ENCODE measurements at regions of chr9 and their contacts with region 1.

Region 1: GRCh38 chr9:37811906-37812476 is 11.4 kb downstream of the DCAF10 start:
- DNase-seq: no peak
- ATAC-seq: no peak; the same call in 2 of the 3 replicates
- H3K4me3 ChIP-seq: no peak overlapping the region
- H3K27ac ChIP-seq: no peak overlapping the region
- H3K4me1 ChIP-seq: no peaks in the 10 kb centered on the region; a peak in 1 of 5 replicates
- H3K27me3 ChIP-seq: no peaks in the 10 kb centered on the region
- CTCF ChIP-seq: no peak
- EP300 ChIP-seq: no peak
- POLR2A ChIP-seq: no peak
- RAD21 ChIP-seq: no peak

Region 2: GRCh38 chr9:37800631-37801286 is 11.2 kb before region 1 on chr9 and contains the start of gene DCAF10:
- CTCF ChIA-PET with region 1: no interaction called
- POLR2A ChIA-PET with region 1: interaction called, 12 read pairs
- in situ Hi-C with region 1: no loop called
- intact Hi-C with region 1: no loop called
- DNase-seq: peak; percentile 90 to 95 (median 94)
- ATAC-seq: peak; percentile 84
- H3K4me3 ChIP-seq: peak within 1 kb of the TSS; percentile 92
- H3K27ac ChIP-seq: peak within 1 kb of the TSS; percentile 85
- H3K4me1 ChIP-seq: peaks cover 8 to 17% of the 10 kb centered on the region in 2 experiments; a peak in 4 of 5 replicates
- H3K27me3 ChIP-seq: no peaks in the 10 kb centered on the region
- CTCF ChIP-seq: peak in 2 of 3 experiments; percentile 23 to 25; a peak in 2 of 6 replicates
- EP300 ChIP-seq: peak; percentile 72
- POLR2A ChIP-seq: peak; percentile 93
- RAD21 ChIP-seq: peak in 1 of 2 experiments; percentile 18; a peak in 2 of 4 replicates
- polyA plus RNA-seq, gene DCAF10: 6.8 to 7.4 TPM

Measured in K562 (cell line).